HepG2 (cell line): ENCODE measurements at regions of chr3 and their contacts with region 1.

Region 1: GRCh38 chr3:187745201-187746058 is at the start of gene BCL6:
- DNase-seq: peak; percentile 97
- ATAC-seq: peak; percentile 28
- H3K4me3 ChIP-seq: peak within 1 kb of the TSS; percentile 98 to 100 (median 99)
- H3K27ac ChIP-seq: peak within 1 kb of the TSS; percentile 100
- H3K4me1 ChIP-seq: peaks cover 40% of the 10 kb centered on the region
- H3K27me3 ChIP-seq: peaks cover 0 to 5% of the 10 kb centered on the region in 2 experiments; a peak in 1 of 5 replicates
- CTCF ChIP-seq: no peak
- EP300 ChIP-seq: peak; percentile 64 to 69; a peak in 3 of 4 replicates
- POLR2A ChIP-seq: peak; percentile 69 to 82
- RAD21 ChIP-seq: 0 out of 2 replicates have a peak, but pooled peaks have one; percentile 13
- total RNA-seq, gene BCL6: 20.3 and 21.2 TPM in 2 replicates

Region 2: DNA sequence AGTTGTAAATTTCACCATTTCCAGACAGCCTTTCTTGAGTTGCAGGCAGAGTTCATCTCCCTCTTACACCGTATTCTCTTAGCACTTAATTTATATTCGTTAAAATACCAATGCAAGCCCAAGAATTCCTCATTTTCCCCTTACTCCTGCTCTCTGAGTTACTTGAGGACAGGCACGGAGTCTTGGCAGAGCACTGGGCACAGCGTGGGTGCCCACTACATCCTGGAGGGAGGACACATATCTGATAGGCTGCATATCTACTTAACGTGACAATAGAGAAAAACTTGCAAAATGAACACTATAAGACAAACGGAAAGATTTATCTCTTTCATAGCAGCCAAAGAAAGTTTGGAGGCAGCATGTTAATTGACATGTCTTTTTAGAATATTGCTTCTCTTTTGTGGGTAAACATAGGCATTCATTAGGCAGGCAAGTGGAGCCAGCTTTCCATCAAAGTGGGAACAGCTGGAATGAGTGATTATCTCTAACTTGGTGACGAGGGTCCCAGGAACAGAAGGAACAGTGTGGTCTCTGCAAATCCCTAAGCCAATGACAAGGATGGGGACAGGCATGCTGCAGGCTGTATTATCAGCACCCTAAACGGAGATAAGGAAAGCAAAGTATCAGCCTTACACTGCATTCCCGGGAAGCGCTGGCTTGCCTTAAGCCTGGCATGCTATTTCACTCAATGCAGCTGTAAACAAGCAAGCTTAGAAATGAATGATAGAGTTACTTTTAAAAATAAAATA is 260.7 kb before region 1 on chr3:
- CTCF ChIA-PET with region 1: no interaction called
- POLR2A ChIA-PET with region 1: no interaction called
- in situ Hi-C with region 1: no loop called
- intact Hi-C with region 1: no loop called
- DNase-seq: no peak
- ATAC-seq: no peak
- H3K4me3 ChIP-seq: no peak overlapping the region
- H3K27ac ChIP-seq: no peak overlapping the region
- H3K4me1 ChIP-seq: no peaks in the 10 kb centered on the region
- H3K27me3 ChIP-seq: no peaks in the 10 kb centered on the region
- CTCF ChIP-seq: no peak
- EP300 ChIP-seq: no peak
- POLR2A ChIP-seq: no peak
- RAD21 ChIP-seq: no peak

Region 3: DNA sequence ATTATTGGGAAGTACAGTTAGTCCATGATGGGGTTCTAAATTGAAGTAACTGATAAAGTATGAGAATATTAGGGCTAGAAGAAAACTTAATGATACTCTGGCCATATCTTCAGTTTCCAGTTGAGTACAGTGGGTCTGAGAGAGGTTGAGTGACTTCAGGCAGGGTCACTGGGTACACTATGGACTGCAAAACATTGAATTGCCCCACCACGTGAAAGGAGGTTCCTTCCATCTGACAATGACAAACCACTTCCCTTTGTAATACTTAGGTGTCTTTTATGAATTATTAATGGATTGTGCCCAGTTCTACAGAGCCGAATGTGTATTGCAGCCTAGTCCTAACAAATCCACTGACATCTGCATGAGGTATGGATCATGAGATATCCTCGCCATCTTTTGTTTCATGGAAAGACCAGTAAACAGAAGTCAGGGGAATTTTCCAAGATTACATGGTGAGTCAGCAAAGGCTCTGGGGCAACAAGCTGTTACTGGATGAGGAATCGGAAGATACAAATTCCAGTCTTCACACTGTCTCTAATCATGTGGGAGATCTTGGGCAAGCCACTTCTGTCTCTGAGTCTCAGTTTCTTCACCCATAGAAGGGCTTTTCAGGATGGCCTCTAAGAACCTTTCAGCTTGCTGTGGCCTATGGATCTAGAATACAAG is 66.3 kb after region 1 on chr3:
- CTCF ChIA-PET with region 1: no interaction called
- POLR2A ChIA-PET with region 1: interaction called, 3 read pairs
- in situ Hi-C with region 1: no loop called
- intact Hi-C with region 1: loop called (anchors 2 kb)
- DNase-seq: no peak
- ATAC-seq: no peak
- H3K4me3 ChIP-seq: no peak overlapping the region
- H3K27ac ChIP-seq: no peak overlapping the region
- H3K4me1 ChIP-seq: peaks cover 50% of the 10 kb centered on the region
- H3K27me3 ChIP-seq: peaks cover 0 to 1% of the 10 kb centered on the region in 2 experiments; a peak in 1 of 5 replicates
- CTCF ChIP-seq: no peak
- EP300 ChIP-seq: no peak
- POLR2A ChIP-seq: no peak
- RAD21 ChIP-seq: no peak

Region 4: DNA sequence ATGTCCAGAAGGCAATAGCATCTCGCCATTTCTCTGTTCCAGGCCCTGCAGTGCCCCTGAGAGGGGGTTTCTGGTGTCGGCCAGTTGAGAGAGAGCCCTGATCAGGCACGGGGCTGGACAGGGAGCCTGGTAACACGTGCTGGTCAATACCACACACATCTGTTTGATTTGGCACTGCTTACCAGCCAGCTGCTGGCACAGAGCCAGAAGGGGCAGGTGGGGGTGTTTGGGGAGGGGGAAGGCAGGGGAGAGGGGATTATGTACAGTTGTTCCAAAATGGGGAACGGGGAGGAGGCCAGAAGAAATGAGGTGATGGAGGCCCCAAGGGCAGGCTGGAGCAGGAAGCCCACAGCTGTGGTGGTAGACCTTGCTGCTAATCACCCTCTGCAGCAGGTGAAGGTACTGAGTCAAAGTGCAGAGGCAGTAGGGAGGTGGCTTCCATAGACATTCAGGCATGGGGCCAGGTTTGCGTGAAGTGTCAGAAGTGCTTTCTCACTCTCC is 255.0 kb after region 1 on chr3:
- CTCF ChIA-PET with region 1: no interaction called
- POLR2A ChIA-PET with region 1: interaction called, 64 read pairs
- in situ Hi-C with region 1: loop called (anchors 10 kb)
- intact Hi-C with region 1: loop called (anchors 1 kb)
- DNase-seq: no peak
- ATAC-seq: peak; percentile 17
- H3K4me3 ChIP-seq: no peak overlapping the region
- H3K27ac ChIP-seq: peak overlapping the region; percentile 90
- H3K4me1 ChIP-seq: peaks cover 99% of the 10 kb centered on the region
- H3K27me3 ChIP-seq: no peaks in the 10 kb centered on the region
- CTCF ChIP-seq: peak; percentile 32; the same call in 1 of the 2 replicates
- EP300 ChIP-seq: peak in 1 of 2 experiments; percentile 53; a peak in 1 of 4 replicates
- POLR2A ChIP-seq: no peak
- RAD21 ChIP-seq: no peak

Region 5: DNA sequence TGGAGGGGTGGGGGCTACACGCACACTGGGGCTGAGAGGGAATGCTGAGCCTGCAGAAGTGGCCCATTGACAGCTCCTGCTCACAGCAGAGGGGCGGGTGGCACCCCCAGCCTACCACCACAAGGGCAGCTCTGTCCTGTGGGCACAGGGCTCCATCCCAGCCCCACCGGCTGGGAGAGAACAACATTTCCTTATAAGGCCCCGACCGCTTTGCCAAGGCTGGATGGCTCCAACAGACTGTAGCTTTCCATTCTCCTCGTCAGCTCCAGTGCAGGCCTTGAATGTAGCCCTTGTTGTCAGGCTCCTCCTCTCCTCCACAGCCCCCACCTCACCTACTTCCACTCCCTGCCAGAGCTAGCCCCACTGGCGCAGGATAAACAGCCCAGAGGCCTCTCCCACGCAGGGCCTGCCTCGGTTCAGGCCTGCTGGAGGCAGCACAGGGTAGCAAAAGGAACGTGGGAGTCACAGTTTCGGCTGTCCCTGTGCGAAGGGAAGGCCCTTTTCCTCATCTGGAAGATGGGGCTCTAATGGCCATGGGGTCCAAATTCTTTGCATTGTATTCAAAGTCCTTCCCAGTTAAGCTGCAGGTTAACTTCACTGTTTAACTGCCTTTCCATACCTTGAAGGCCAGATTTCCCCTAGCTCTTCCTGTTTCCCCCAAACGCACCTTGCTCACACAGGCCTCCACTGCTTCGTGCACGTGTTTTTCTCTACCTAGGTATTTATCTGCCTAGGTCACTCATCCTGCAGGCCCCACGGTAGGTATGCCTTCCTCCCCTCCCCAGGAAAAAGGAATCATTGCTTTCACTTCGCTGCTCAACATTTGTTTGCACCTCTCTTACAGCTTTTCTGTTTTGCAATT is 307.0 kb after region 1 on chr3:
- CTCF ChIA-PET with region 1: no interaction called
- POLR2A ChIA-PET with region 1: interaction called, 19 read pairs
- in situ Hi-C with region 1: no loop called
- intact Hi-C with region 1: no loop called
- DNase-seq: peak; percentile 90
- ATAC-seq: peak; percentile 96
- H3K4me3 ChIP-seq: peak overlapping the region; percentile 10 to 51 (median 26); a peak in 4 of 6 replicates
- H3K27ac ChIP-seq: peak overlapping the region; percentile 72
- H3K4me1 ChIP-seq: peaks cover 76% of the 10 kb centered on the region
- H3K27me3 ChIP-seq: no peaks in the 10 kb centered on the region
- CTCF ChIP-seq: peak; percentile 86
- EP300 ChIP-seq: peak; percentile 62 to 71
- POLR2A ChIP-seq: peak; percentile 54 to 55; a peak in 2 of 4 replicates
- RAD21 ChIP-seq: peak; percentile 76

Region 6: GRCh38 chr3:188421836-188422540 is 676.6 kb after region 1 on chr3:
- CTCF ChIA-PET with region 1: no interaction called
- POLR2A ChIA-PET with region 1: no interaction called
- in situ Hi-C with region 1: loop called (anchors 25 kb)
- intact Hi-C with region 1: no loop called
- DNase-seq: no peak
- ATAC-seq: no peak
- H3K4me3 ChIP-seq: no peak overlapping the region
- H3K27ac ChIP-seq: no peak overlapping the region
- H3K4me1 ChIP-seq: no peaks in the 10 kb centered on the region; the same call in 1 of the 2 replicates
- H3K27me3 ChIP-seq: no peaks in the 10 kb centered on the region
- CTCF ChIP-seq: no peak
- EP300 ChIP-seq: no peak
- POLR2A ChIP-seq: no peak
- RAD21 ChIP-seq: no peak

Region 7: GRCh38 chr3:189148081-189148507 is 1402.7 kb after region 1 on chr3:
- CTCF ChIA-PET with region 1: interaction called, 3 read pairs
- POLR2A ChIA-PET with region 1: no interaction called
- in situ Hi-C with region 1: loop called (anchors 10 kb)
- intact Hi-C with region 1: no loop called
- DNase-seq: peak; percentile 52
- ATAC-seq: peak; percentile 94
- H3K4me3 ChIP-seq: no peak overlapping the region
- H3K27ac ChIP-seq: no peak overlapping the region
- H3K4me1 ChIP-seq: peaks cover 10% of the 10 kb centered on the region
- H3K27me3 ChIP-seq: no peaks in the 10 kb centered on the region; a peak in 2 of 5 replicates
- CTCF ChIP-seq: peak; percentile 84
- EP300 ChIP-seq: no peak
- POLR2A ChIP-seq: no peak
- RAD21 ChIP-seq: peak; percentile 25; the same call in 1 of the 2 replicates